Transverse colon (tissue), 4 donors: ENCODE measurements at regions of chr3 and their contacts with region 1.

Region 1: DNA sequence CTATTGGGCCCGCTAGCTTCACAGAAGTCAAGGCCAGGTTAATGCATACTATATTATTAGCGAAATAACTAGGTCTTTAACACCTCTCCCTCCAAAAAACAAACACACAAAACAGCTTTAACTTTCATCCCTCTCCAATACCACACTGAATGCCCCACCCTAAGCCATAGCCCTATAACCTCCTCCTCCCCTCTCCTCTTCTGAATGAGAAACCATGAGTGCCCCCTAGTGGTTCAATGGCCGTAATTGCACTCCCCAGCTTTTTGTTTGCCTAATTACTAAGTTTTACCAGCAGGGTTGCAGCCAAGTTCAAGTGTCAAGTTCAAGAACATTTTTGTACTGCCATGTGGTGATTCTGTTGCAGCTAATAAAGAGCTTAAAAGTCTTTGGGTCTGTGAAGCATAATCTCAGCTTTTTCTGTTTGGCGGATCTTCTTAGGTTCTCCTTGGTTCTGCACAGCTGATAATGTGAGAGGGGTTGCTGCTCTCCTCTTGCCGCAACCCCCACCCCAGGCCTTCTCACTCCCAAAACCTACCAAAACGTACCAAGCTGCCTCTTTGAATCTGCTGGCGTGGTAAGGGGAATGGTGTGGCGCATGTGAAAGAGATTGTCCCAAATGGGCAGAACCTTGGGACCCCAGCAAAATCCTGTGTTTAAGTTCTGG is 57.9 kb downstream of the RPL22L1 start:
- DNase-seq: peak; percentile 76
- H3K4me3 ChIP-seq: no peak overlapping the region
- H3K27ac ChIP-seq: no peak overlapping the region
- H3K4me1 ChIP-seq: peaks cover 4 to 28% (median 8%) of the 10 kb centered on the region in 4 donors
- H3K27me3 ChIP-seq: no peaks in the 10 kb centered on the region
- CTCF ChIP-seq: peak; percentile 80 to 98 (median 96)
- EP300 ChIP-seq: no peak
- POLR2A ChIP-seq: no peak

Region 2: GRCh38 chr3:170414202-170414663 is 397.8 kb before region 1 on chr3:
- in situ Hi-C with region 1: loop called in 3 of 4 experiments (anchors 10 to 25 kb)
- intact Hi-C with region 1: loop called (anchors 5 kb)
- DNase-seq: no peak
- H3K4me3 ChIP-seq: no peak overlapping the region
- H3K27ac ChIP-seq: no peak overlapping the region
- H3K4me1 ChIP-seq: peaks cover 4 to 12% (median 11%) of the 10 kb centered on the region in 4 donors
- H3K27me3 ChIP-seq: peaks cover 34% of the 10 kb centered on the region
- CTCF ChIP-seq: peak; percentile 86 to 96 (median 89)
- EP300 ChIP-seq: no peak
- POLR2A ChIP-seq: no peak

Region 3: DNA sequence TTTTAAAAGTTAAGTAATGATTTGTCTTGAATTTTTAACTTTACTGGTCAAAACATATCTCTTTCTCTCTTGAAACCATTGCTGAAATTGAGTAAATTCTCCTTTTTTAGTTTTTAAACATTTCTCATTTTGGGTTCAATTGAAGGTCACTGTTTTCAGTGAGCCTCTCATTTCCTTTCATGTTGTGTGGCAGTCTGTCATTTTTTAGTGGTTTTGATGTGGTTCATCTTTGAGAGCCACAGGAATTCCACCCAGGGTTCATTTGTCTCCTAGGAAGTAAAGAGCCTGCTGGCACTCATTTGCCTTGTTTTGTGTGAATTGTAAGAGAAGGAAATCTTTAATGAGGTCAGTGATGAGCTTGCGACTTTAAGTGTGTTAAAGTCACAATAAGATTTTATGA is 383.0 kb before region 1 on chr3:
- in situ Hi-C with region 1: loop called in 2 of 4 experiments (anchors 25 kb)
- intact Hi-C with region 1: no loop called
- DNase-seq: no peak
- H3K4me3 ChIP-seq: no peak overlapping the region
- H3K27ac ChIP-seq: no peak overlapping the region
- H3K4me1 ChIP-seq: no peaks in the 10 kb centered on the region
- H3K27me3 ChIP-seq: no peaks in the 10 kb centered on the region
- CTCF ChIP-seq: no peak
- EP300 ChIP-seq: no peak
- POLR2A ChIP-seq: no peak

Region 4: DNA sequence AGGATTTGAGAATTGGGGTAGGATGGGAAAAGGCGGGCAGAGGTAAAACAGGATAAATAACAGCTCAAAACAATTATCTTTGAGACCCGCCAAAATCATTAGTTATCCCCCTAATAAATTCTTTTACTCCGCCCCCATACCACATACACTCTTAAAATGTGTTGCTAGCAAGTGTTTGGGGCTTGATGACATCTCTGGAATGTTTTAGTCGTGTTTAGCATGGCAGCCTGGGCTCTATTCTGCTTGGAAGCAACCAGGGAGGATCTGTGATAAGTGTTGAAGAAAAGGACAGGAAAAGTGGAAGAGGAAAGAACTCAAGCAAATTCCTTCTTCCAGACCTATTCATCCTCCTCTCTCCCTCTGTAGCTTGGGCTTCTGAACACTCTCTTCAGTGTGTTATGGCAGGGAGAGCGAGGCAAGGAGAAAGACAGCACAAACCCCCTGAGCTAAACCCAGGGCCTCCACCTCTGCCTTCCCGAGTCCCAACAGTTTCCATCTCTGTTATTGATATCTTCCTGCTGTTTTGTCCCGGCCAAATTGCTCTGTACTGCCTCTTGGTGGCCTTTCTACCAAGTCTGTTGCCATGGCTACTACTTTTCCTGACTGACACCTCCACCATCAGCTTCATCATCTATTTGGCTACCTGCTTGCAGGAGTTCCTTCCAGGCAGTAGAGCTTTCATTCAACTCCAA is 77.9 kb before region 1 on chr3:
- in situ Hi-C with region 1: no loop called
- intact Hi-C with region 1: no loop called
- DNase-seq: no peak
- H3K4me3 ChIP-seq: no peak overlapping the region
- H3K27ac ChIP-seq: no peak overlapping the region
- H3K4me1 ChIP-seq: no peaks in the 10 kb centered on the region
- H3K27me3 ChIP-seq: no peaks in the 10 kb centered on the region
- CTCF ChIP-seq: no peak
- EP300 ChIP-seq: no peak
- POLR2A ChIP-seq: no peak

Region 5: GRCh38 chr3:171306631-171307030 is 494.6 kb after region 1 on chr3:
- in situ Hi-C with region 1: no loop called
- intact Hi-C with region 1: no loop called
- DNase-seq: peak; percentile 56
- H3K4me3 ChIP-seq: no peak overlapping the region
- H3K27ac ChIP-seq: peak overlapping the region; percentile 67 to 77 (median 72)
- H3K4me1 ChIP-seq: peaks cover 0 to 8% (median 0%) of the 10 kb centered on the region in 4 donors
- H3K27me3 ChIP-seq: no peaks in the 10 kb centered on the region
- CTCF ChIP-seq: no peak
- EP300 ChIP-seq: no peak
- POLR2A ChIP-seq: no peak